Sigmoid colon (tissue), 7 donors: ENCODE measurements at regions of chr9 and their contacts with region 1.

Region 1: DNA sequence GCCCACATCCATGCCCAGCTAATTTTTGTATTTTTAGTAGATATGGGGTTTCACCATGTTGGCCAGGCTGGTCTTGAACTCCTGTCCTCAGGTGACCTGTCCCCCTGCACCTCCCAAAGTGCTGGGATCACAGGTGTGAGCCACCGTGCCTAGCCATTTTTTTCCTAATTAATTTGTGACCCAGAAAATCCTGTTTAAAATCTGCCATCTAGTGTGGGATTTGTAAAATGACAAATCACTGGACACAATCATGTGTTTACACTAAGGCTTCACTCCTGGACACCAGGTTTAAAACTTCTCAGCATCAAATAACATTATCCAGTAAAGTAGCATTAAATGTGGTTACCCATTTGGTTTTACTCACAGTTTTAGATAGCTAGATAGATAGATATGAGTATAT is 18.6 kb upstream of the KDM4C start:
- DNase-seq: no peak
- H3K4me3 ChIP-seq: no peak overlapping the region
- H3K27ac ChIP-seq: no peak overlapping the region
- H3K4me1 ChIP-seq: no peaks in the 10 kb centered on the region
- H3K27me3 ChIP-seq: no peaks in the 10 kb centered on the region
- CTCF ChIP-seq: peak in 1 of 4 experiments; percentile 14
- EP300 ChIP-seq: no peak
- POLR2A ChIP-seq: no peak

Region 2: DNA sequence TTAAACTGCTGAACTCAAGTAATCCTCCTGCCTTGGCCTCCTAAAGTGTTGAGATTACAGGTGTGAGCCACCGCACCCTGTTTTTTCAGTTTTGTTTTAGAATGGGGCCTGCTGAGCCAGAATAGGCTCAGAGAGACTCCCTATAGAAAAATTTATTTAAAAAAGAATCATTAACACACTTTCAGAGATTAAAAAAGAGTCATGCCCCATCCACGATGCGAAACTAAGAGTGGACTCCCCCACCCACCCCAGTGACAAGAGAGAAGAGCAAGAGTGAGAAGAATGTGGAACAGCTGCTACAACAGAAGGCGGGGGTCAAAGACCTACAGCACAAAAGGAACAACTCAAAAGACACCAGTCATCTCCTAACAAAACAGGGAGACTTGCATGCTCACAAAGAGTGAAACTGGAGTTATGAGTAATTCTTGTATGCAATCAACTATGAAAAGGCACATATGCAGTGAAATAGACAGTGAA is 140.9 kb before region 1 on chr9:
- intact Hi-C with region 1: loop called (anchors 10 kb)
- DNase-seq: no peak
- H3K4me3 ChIP-seq: no peak overlapping the region
- H3K27ac ChIP-seq: no peak overlapping the region
- H3K4me1 ChIP-seq: no peaks in the 10 kb centered on the region
- H3K27me3 ChIP-seq: no peaks in the 10 kb centered on the region
- CTCF ChIP-seq: no peak
- EP300 ChIP-seq: no peak
- POLR2A ChIP-seq: no peak